Activated CD4-positive, alpha-beta memory T cell treated with anti-CD3 and anti-CD28 coated beads for 36 hours (primary cell): ENCODE measurements at regions of chr5 and their contacts with region 1.

Region 1: GRCh38 chr5:151150471-151151262 is 6.9 kb downstream of the ANXA6 start:
- DNase-seq: peak; percentile 87
- H3K4me3 Mint-ChIP-seq: peak overlapping the region; percentile 36
- H3K27ac Mint-ChIP-seq: peak overlapping the region; percentile 90
- H3K4me1 Mint-ChIP-seq: peaks cover 94% of the 10 kb centered on the region
- H3K27me3 Mint-ChIP-seq: no peaks in the 10 kb centered on the region

Region 2: GRCh38 chr5:150449517-150450339 is 700.9 kb before region 1 on chr5 and contains the start of gene RPS14:
- CTCF ChIA-PET with region 1: no interaction called
- POLR2A ChIA-PET with region 1: no interaction called
- intact Hi-C with region 1: loop called (anchors 5 kb)
- DNase-seq: peak; percentile 96
- H3K4me3 Mint-ChIP-seq: peak within 1 kb of the TSS; percentile 91
- H3K27ac Mint-ChIP-seq: peak within 1 kb of the TSS; percentile 99
- H3K4me1 Mint-ChIP-seq: peaks cover 32% of the 10 kb centered on the region
- H3K27me3 Mint-ChIP-seq: no peaks in the 10 kb centered on the region
- total RNA-seq, gene RPS14: 3,748 to 3,882 TPM

Region 3: DNA sequence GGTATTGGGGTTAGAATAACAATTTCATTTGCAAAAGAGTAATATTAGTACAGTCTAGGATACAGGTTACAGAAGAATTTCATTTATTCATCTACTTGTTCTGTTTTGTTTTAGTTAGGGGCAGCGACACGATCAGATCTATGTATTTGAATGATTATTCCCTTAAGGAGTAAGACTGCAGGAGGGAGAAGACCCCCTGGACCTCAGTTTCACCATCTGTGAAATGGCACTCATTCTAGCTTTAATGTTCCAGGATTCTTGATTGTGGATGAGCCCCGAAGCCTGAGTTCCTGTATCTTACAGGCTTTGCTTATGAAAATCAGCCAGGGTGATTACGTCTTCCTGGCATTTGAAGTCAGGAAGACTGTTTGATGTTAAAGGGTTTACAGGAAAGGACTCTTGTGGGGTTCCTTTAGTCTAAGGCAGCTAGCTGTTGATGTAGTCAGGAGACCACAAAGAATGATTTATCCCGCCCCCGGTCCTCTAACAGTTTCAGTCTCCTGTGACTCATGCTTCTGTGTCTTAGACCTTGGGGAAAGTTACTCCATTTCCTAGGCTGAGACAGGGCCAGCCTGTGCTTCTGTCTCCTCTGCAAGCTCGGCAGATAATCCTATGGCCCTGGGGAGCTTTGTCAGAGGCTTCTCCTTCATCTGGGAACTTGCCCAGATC is 360.6 kb before region 1 on chr5:
- CTCF ChIA-PET with region 1: no interaction called
- POLR2A ChIA-PET with region 1: no interaction called
- intact Hi-C with region 1: loop called (anchors 2 kb)
- DNase-seq: peak; percentile 88
- H3K4me3 Mint-ChIP-seq: peak overlapping the region; percentile 53
- H3K27ac Mint-ChIP-seq: peak overlapping the region; percentile 93
- H3K4me1 Mint-ChIP-seq: peaks cover 60% of the 10 kb centered on the region
- H3K27me3 Mint-ChIP-seq: no peaks in the 10 kb centered on the region

Region 4: DNA sequence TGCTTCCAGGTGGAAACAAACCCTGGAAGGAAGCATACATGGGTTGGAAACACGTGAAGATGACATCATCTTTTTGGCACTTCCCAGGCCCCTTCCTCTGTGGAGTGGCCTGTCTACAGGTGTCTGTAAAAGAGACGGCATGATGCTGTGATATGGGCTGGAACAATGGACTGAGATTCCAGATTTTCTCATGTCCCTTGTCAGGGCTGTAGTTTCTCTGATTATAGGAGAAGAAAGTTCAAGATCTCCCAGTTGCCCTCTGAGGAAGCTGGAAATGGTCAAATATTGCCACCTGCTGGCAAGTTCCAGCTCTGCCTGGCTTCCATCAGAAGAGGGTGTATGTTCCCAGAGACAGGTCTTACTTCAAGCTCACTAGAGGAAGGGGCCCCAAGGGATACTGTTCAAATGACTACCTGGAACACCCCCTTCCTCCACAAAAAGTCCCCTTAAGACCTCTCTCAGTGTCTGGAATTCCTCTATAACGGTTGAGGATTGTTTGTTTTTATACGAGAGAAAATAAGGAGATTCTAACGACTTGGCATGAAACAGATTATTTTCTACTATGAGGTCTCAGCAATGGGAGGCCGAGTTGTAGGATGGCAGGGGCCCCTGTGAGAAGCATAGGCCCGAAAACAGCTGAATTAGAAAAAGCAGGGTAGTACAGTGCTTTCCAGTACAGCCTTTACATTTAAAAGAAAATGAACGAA is 14.2 kb after region 1 on chr5:
- CTCF ChIA-PET with region 1: interaction called, 44 read pairs
- POLR2A ChIA-PET with region 1: no interaction called
- intact Hi-C with region 1: no loop called
- DNase-seq: peak; percentile 90
- H3K4me3 Mint-ChIP-seq: no peak overlapping the region
- H3K27ac Mint-ChIP-seq: no peak overlapping the region
- H3K4me1 Mint-ChIP-seq: peaks cover 18% of the 10 kb centered on the region
- H3K27me3 Mint-ChIP-seq: no peaks in the 10 kb centered on the region

Region 5: DNA sequence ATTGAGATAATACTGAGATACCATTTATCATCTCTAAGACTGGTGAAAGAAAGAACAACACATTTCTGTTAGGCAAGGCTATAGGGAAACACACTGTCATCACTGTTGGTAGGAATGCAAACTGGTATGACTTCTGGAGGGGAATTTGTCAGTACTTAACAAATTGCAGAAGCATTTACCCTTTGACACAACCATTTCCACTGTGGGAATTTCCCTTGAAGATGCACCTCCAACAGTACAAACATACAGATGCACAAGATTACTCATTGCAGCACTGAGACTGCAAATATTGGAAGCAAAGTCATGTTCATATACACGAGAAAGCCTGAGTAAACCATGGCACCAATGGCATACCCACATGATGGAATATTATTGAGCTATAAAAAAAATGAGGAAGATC is 119.9 kb after region 1 on chr5:
- CTCF ChIA-PET with region 1: no interaction called
- POLR2A ChIA-PET with region 1: no interaction called
- intact Hi-C with region 1: loop called (anchors 2 kb)
- DNase-seq: no peak
- H3K4me3 Mint-ChIP-seq: no peak overlapping the region
- H3K27ac Mint-ChIP-seq: no peak overlapping the region
- H3K4me1 Mint-ChIP-seq: no peaks in the 10 kb centered on the region
- H3K27me3 Mint-ChIP-seq: no peaks in the 10 kb centered on the region